Adrenal gland (tissue), 19 donors: ENCODE measurements at regions of chr11 and their contacts with region 1.

Region 1: DNA sequence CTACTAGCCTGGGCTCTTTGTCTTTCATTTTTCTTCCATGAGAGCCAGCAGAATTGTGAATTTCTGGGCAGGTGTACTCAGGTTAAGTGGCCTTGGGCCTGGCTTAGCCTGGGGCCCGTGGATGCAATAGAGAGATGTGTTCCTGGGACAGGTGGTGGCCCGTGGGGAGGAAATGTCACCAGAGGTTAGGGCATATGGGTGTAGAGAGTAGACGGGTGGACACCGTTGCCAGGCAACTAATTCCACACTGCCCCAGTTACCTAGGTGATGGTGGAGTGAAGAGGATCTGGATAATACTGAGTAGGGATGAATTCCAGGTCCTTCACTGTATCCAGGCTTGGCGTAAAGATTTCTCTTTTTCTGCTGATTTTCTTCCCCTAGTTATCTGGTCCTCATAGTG is 175.0 kb downstream of the INSC start:
- DNase-seq: peak in 1 of 7 donors; percentile 58
- H3K4me3 ChIP-seq: no peak overlapping the region
- H3K27ac ChIP-seq: no peak overlapping the region
- H3K4me1 ChIP-seq: no peaks in the 10 kb centered on the region
- H3K27me3 ChIP-seq: no peaks in the 10 kb centered on the region
- CTCF ChIP-seq: no peak
- POLR2A ChIP-seq: no peak

Region 2: DNA sequence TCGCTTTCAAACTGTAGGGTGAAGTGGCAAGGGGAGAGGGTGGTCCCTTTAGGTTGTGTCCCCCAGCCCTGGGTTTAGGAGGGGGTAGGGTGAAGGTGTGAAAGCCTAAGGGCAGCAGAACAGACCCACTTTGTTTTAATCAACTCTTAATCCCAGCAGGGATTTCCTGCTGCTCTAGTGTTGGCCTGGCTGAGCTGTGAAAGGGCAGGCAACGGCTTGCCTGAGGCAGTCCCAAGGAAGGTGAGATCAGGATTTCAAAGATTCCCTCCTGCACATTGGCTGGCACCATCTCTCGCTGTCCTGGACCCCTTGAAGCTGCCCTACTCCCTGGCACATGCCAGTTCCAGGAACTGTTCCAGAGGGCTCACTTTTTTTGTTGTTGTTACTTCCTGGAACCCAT is 46.3 kb after region 1 on chr11:
- intact Hi-C with region 1: loop called in 1 of 2 experiments (anchors 10 kb)
- DNase-seq: no peak
- H3K4me3 ChIP-seq: no peak overlapping the region
- H3K27ac ChIP-seq: no peak overlapping the region
- H3K4me1 ChIP-seq: no peaks in the 10 kb centered on the region
- H3K27me3 ChIP-seq: no peaks in the 10 kb centered on the region
- CTCF ChIP-seq: no peak
- POLR2A ChIP-seq: no peak

Region 3: DNA sequence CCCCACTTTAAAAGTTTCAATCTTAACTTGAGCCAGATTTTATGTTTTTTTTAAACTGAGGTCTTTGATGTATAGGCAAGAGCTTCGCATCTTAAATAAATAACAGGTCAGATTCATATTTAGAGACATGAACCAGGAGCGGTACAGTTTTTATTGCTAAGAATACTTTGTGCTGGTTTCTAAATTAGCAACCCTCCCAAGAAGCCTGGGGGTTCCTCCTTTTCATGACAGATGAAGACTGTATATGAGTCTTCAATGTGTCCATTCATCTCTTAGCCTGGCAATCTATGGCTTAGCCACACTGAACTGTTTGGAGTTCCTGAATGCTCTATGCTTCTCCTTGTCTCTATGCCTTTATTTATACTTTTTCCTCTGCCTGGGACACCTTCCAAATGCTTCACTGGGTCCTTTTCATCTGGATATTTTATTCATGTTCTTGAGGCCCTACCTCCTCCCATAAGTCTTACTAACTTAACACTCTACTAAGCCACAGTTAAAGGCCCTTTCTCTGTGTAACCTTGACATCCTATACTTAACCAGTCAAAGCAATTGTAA is 163.6 kb after region 1 on chr11:
- intact Hi-C with region 1: no loop called
- DNase-seq: no peak
- H3K4me3 ChIP-seq: no peak overlapping the region
- H3K27ac ChIP-seq: no peak overlapping the region
- H3K4me1 ChIP-seq: no peaks in the 10 kb centered on the region
- H3K27me3 ChIP-seq: no peaks in the 10 kb centered on the region
- CTCF ChIP-seq: no peak
- POLR2A ChIP-seq: no peak